ENCODE measurements at regions of chr11 and their contacts with region 1.

Region 1: DNA sequence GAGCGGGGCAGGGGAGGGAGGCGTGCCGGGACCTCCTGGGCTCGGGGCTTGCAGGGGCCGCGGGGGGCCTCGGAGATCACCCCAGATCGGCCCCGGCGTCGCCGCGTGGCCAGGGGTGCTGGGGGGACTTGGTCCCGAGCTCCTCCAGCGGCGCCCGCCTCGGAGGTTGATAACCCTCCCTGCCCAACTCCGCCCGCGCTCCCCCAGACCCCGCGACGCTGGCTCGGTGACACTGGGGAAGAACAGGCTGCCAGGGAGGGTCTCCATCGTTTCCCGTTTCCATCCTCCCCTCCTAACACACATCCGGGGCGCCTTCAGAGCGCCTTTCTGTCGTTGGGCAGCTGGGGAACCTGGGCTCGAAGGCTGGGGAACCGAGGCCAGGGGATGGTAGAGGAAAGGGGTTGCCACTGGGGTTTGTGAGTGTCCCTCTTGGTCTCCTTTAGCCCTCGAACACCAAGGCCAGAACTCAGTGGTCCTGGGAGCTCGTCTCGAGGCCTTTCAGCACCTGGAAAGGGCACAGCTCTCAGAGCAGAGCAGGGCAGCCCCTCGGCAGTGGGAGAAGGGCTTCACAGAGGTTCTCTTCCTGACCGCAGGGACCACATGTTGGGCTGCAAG is 431 bp downstream of the SLC37A2 start:
- DNase-seq: no peak
- H3K4me3 ChIP-seq: peak overlapping the region; percentile 61 to 62
- H3K27ac ChIP-seq: peak overlapping the region; percentile 68 to 74
- H3K4me1 ChIP-seq: peaks cover 0 to 16% (median 10%) of the 10 kb centered on the region in 4 donors
- H3K27me3 ChIP-seq: peaks cover 0 to 3% of the 10 kb centered on the region in 2 donors
- CTCF ChIP-seq: no peak

Region 2: DNA sequence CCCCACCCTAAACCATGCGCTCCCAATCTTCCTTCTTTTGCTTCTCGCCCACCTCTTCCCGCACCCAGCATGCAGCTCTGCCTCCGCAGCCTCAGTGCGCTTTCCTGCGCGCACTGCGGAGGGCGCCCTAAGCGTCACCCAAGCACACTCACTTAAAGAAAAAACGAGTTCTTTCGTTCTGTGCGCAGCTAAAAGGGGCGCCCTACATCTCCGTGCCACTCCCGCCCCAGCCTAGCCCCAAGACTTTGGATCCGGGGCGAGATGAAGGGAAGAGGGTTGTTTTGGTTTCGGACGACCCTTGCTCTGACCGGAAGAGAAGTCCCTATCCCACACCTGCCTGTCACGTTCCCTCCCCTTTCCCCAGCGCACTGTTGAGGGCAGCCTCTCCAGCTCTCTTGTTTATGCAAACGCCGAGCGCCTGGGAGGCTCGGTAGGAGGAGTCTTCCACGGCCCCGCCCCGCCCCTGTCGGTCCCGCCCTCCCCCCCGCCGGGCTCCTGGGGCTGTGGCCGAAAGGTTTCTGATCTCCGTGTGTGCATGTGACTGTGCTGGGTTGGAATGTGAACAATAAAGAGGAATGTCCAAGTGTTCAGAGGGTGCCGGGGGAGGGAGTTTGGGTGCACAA is 316.8 kb before region 1 on chr11:
- intact Hi-C with region 1: no loop called
- DNase-seq: peak; percentile 65 to 91
- H3K4me3 ChIP-seq: peak overlapping the region; percentile 60 to 61
- H3K27ac ChIP-seq: peak overlapping the region; percentile 77 to 80
- H3K4me1 ChIP-seq: peaks cover 0 to 36% (median 11%) of the 10 kb centered on the region in 4 donors
- H3K27me3 ChIP-seq: no peaks in the 10 kb centered on the region
- CTCF ChIP-seq: peak; percentile 34

Region 3: GRCh38 chr11:124837491-124837856 is 226.1 kb before region 1 on chr11:
- intact Hi-C with region 1: no loop called
- DNase-seq: no peak
- H3K4me3 ChIP-seq: no peak overlapping the region
- H3K27ac ChIP-seq: no peak overlapping the region
- H3K4me1 ChIP-seq: peaks cover 0 to 20% (median 14%) of the 10 kb centered on the region in 4 donors
- H3K27me3 ChIP-seq: peaks cover 0 to 45% of the 10 kb centered on the region in 2 donors
- CTCF ChIP-seq: no peak

Region 4: DNA sequence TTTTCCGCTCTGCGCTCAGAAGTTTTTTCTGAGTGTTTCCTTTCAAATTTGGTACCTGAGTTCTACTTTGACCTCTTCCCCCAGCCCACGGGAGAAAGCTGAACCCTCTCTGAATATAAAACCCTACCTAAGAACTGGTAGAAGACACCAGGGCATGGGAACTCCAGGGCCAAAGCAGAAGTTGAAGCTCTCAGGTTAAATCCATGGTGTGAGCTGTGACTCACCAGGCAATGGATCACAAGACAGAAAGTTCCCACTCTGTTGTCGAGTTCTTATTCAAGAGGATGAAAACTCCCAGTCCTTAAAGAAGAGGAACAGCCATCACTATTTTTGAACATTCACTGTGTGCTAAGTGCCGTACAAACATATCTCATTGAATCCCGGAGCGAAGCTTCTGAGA is 39.0 kb after region 1 on chr11:
- intact Hi-C with region 1: no loop called
- DNase-seq: no peak
- H3K4me3 ChIP-seq: no peak overlapping the region
- H3K27ac ChIP-seq: no peak overlapping the region
- H3K4me1 ChIP-seq: no peaks in the 10 kb centered on the region
- H3K27me3 ChIP-seq: no peaks in the 10 kb centered on the region
- CTCF ChIP-seq: no peak

Region 5: DNA sequence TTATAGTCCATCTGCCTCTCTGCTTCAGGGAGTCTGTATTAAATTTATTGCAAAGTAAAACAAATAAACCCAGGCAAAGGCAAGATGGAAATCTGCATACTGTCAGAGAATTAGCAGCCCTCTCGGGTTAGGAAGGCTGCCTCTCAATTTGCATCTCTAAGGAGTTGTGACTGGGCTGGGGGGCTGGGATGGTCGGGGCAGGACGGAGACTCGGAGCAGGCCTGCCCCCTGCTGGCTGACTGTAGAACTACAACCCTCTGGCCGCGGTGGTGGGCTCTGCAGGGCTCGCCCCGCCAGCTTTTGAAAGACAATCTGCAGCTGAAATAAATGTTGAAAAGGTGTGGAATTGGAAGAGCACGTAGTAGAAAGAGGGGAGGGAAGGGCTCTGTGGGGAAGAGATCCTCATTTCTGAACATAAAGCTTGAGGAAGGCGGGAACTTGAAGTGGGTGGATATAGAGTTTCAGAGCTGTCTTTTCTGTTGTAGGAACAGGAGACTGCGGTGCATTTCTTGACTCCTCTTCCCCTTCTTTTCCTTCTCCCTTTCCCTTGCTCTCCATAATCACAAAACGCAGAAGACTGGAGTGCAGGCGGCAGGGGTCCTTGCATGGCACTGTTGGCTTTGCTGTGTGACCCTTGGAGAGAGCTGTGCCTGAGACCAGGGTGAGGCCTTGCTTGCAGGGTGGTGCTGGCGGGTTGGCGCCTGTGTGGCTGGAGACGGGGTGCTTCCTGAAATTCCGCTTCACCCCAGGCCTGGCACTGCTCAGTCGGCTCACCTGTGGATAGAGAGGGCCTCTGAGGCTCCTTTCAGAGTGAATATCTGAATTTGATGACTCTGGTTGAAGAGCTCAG is 78.4 kb after region 1 on chr11:
- intact Hi-C with region 1: loop called (anchors 2 kb)
- DNase-seq: no peak
- H3K4me3 ChIP-seq: no peak overlapping the region
- H3K27ac ChIP-seq: no peak overlapping the region
- H3K4me1 ChIP-seq: no peaks in the 10 kb centered on the region
- H3K27me3 ChIP-seq: peaks cover 0 to 26% of the 10 kb centered on the region in 2 donors
- CTCF ChIP-seq: peak; percentile 80 to 94

Region 6: GRCh38 chr11:125180413-125181305 is 117.1 kb after region 1 on chr11:
- intact Hi-C with region 1: no loop called
- DNase-seq: peak in 1 of 2 donors; percentile 20
- H3K4me3 ChIP-seq: no peak overlapping the region
- H3K27ac ChIP-seq: no peak overlapping the region
- H3K4me1 ChIP-seq: peaks cover 0 to 8% (median 5%) of the 10 kb centered on the region in 4 donors
- H3K27me3 ChIP-seq: peaks cover 0 to 3% of the 10 kb centered on the region in 2 donors
- CTCF ChIP-seq: no peak

Measured in tibial artery (tissue), 4 donors.